Heart left ventricle (tissue), 16 donors: ENCODE measurements at regions of chr9 and their contacts with region 1.

Region 1: DNA sequence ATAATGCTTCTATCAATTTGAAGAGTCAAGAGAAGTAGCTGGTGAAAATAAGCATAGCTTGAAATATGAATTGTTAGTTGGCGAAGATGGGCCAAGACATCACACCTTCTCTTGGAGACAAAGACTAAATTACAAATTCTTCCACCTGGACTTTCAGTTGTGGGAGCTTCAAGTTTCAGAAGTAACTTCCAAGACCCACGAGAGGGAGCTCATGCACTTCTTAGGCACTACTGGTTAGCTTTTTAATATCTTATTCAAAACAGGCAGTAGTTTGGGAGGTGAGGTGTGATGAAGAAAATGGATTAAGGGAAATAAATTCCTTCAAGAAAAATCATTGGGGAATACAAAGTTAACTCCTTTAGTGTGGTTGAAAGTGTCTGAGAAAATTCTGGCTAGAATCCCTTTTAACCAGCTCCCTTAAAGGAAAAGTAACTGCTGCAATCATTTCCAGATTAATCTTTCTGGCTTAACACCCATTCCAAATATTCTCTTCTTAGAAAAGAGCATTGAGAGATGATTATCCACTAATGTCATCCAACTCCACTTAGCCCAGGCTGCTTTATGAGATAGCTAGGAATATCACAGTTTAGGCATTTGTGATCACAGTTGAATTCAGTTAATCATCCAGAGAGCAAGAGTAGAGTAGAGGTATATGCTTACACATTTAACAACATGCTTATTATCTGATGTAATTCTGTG is 139.5 kb upstream of the DMRTA1 start:
- DNase-seq: no peak
- ATAC-seq: peak in 1 of 4 donors; percentile 57
- H3K4me3 ChIP-seq: no peak overlapping the region
- H3K27ac ChIP-seq: no peak overlapping the region
- H3K4me1 ChIP-seq: no peaks in the 10 kb centered on the region
- H3K27me3 ChIP-seq: peaks cover 0 to 13% (median 0%) of the 10 kb centered on the region in 9 donors
- CTCF ChIP-seq: peak; percentile 29 to 67 (median 50)
- POLR2A ChIP-seq: no peak

Region 2: GRCh38 chr9:21974548-21975409 is 332.4 kb before region 1 on chr9:
- intact Hi-C with region 1: no loop called
- DNase-seq: peak in 1 of 5 donors; percentile 26
- ATAC-seq: peak in 3 of 4 donors; percentile 61 to 68 (median 61)
- H3K4me3 ChIP-seq: peak overlapping the region; percentile 21 to 53 (median 44)
- H3K27ac ChIP-seq: no peak overlapping the region
- H3K4me1 ChIP-seq: peaks cover 0 to 26% (median 13%) of the 10 kb centered on the region in 12 donors
- H3K27me3 ChIP-seq: peaks cover 61 to 100% (median 100%) of the 10 kb centered on the region in 9 donors
- CTCF ChIP-seq: no peak
- POLR2A ChIP-seq: no peak

Region 3: GRCh38 chr9:22446950-22447617 is 139.9 kb after region 1 on chr9:
- intact Hi-C with region 1: loop called (anchors 1 to 5 kb)
- DNase-seq: peak; percentile 35 to 75 (median 67)
- ATAC-seq: peak; percentile 72 to 92 (median 84)
- H3K4me3 ChIP-seq: peak overlapping the region; percentile 48 to 75 (median 64)
- H3K27ac ChIP-seq: peak overlapping the region; percentile 28 to 92 (median 81)
- H3K4me1 ChIP-seq: peaks cover 0 to 22% (median 0%) of the 10 kb centered on the region in 12 donors
- H3K27me3 ChIP-seq: peaks cover 0 to 36% (median 0%) of the 10 kb centered on the region in 9 donors
- CTCF ChIP-seq: peak in 5 of 12 donors; percentile 6 to 33 (median 22)
- POLR2A ChIP-seq: no peak

Region 4: GRCh38 chr9:22452415-22453010 is 145.4 kb after region 1 on chr9:
- intact Hi-C with region 1: loop called (anchors 1 to 5 kb)
- DNase-seq: peak in 2 of 5 donors; percentile 29 to 51
- ATAC-seq: peak in 1 of 4 donors; percentile 53
- H3K4me3 ChIP-seq: no peak overlapping the region
- H3K27ac ChIP-seq: no peak overlapping the region
- H3K4me1 ChIP-seq: peaks cover 0 to 6% (median 0%) of the 10 kb centered on the region in 12 donors
- H3K27me3 ChIP-seq: peaks cover 0 to 17% (median 0%) of the 10 kb centered on the region in 9 donors
- CTCF ChIP-seq: peak; percentile 54 to 85 (median 76)
- POLR2A ChIP-seq: no peak